Aorta (tissue), 5 donors: ENCODE measurements at regions of chr12 and their contacts with region 1.

Region 1: DNA sequence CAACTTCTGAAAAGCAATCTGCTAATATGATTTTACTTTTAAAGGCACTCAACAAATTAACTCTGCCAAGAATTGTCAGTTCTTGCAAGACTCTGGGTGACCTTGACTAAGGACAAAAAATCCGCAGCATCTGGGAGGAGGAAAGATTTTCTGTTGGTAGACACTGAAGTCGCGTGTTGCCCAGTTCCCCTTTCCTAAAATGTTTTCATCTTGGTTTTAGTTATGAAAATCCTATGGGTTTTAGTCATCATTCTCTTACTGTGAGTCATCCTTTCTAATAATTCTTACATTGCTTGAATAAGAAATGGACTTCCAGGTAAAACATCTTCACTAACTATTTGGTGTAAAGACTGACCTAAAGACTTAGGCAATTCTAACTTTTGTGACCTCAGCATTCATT is 9.1 kb downstream of the GSG1 start:
- DNase-seq: no peak
- ATAC-seq: no peak
- H3K4me3 ChIP-seq: no peak overlapping the region
- H3K27ac ChIP-seq: no peak overlapping the region
- H3K4me1 ChIP-seq: peaks cover 0 to 7% of the 10 kb centered on the region in 2 donors
- H3K27me3 ChIP-seq: no peaks in the 10 kb centered on the region

Region 2: DNA sequence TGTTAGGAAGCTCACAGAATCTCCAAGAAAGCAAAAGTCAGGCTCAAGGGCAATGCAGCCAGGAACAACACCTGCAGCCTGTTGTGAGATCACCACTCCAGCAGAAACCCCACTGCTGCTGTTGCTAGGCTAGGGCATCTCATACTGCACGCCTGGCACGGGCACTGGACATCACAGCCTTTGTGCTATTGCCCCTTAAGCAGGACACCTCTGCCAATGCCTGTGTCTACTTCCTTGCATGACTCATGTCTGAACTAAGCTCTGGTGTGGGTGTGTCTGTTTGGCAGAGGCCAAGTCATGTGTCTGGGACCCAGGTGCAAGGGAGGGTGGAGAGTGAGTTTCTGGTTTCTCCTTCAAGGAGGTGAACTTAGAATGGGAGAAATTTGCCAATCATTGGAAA is 291.2 kb before region 1 on chr12:
- intact Hi-C with region 1: loop called in 1 of 2 experiments (anchors 10 kb)
- DNase-seq: peak in 1 of 2 donors; percentile 68
- ATAC-seq: peak; percentile 81
- H3K4me3 ChIP-seq: no peak overlapping the region
- H3K27ac ChIP-seq: no peak overlapping the region
- H3K4me1 ChIP-seq: no peaks in the 10 kb centered on the region
- H3K27me3 ChIP-seq: no peaks in the 10 kb centered on the region